ENCODE measurements at regions of chr3 and their contacts with region 1.

Region 1: DNA sequence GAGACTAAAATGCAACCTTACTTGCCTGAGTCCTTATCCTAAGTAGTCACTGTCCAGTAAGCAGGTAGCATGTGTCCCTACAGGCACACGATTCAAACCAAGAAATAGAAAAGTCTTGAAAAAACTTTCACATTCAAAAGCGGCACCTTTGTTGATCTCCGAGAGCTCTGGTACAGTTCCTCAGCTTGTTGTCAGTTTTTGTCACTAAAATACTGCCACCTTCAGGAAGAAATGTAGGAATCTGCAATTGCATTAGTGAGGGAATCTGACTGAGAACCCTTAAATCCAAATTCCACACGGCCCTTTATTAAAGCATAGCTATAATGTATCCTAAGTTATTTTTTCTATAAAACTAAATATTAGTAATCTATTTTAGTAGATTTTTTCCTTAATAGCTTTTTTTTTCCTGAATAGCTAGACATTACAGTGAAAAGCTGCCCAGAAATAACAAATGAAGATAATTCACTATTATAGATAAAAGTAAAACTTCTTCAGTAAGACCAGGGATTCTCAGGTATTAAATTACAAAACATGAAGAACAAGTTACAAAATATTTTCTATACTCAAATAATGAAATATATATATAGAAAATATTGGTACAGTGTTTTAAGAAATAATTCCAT is 44.0 kb downstream of the CCDC54 start:
- DNase-seq: peak in 6 of 35 experiments; percentile 3 to 67 (median 6)
- ATAC-seq: peak; percentile 45 to 81 (median 75)
- H3K4me3 ChIP-seq: no peak overlapping the region
- H3K4me3 Mint-ChIP-seq: no peak overlapping the region
- H3K27ac ChIP-seq: no peak overlapping the region
- H3K27ac Mint-ChIP-seq: no peak overlapping the region
- H3K4me1 ChIP-seq: no peaks in the 10 kb centered on the region
- H3K4me1 Mint-ChIP-seq: peaks cover 3 to 6% (median 3%) of the 10 kb centered on the region in 3 donors
- H3K27me3 ChIP-seq: no peaks in the 10 kb centered on the region
- H3K27me3 Mint-ChIP-seq: peaks cover 6 to 16% of the 10 kb centered on the region in 2 donors

Region 2: GRCh38 chr3:107235928-107236315 is 185.4 kb before region 1 on chr3:
- CTCF ChIA-PET with region 1: interaction called, 6 to 18 read pairs
- POLR2A ChIA-PET with region 1: no interaction called
- DNase-seq: peak in 31 of 35 experiments; percentile 2 to 82 (median 32)
- ATAC-seq: peak; percentile 61 to 72 (median 66)
- H3K4me3 ChIP-seq: peak overlapping the region in 1 of 2 donors; percentile 7
- H3K4me3 Mint-ChIP-seq: peak overlapping the region; percentile 52 to 67 (median 59)
- H3K27ac ChIP-seq: no peak overlapping the region
- H3K27ac Mint-ChIP-seq: peak overlapping the region in 1 of 2 donors; percentile 11
- H3K4me1 ChIP-seq: peaks cover 6 to 8% of the 10 kb centered on the region in 2 experiments
- H3K4me1 Mint-ChIP-seq: peaks cover 11 to 13% (median 13%) of the 10 kb centered on the region in 3 donors
- H3K27me3 ChIP-seq: peaks cover 0 to 4% of the 10 kb centered on the region in 2 experiments
- H3K27me3 Mint-ChIP-seq: peaks cover 4 to 8% of the 10 kb centered on the region in 2 donors

Region 3: GRCh38 chr3:107271787-107272387 is 149.4 kb before region 1 on chr3:
- CTCF ChIA-PET with region 1: interaction called, 10 to 25 read pairs
- POLR2A ChIA-PET with region 1: no interaction called
- DNase-seq: peak in 1 of 35 experiments; percentile 32
- ATAC-seq: peak in 2 of 4 experiments; percentile 36 to 51
- H3K4me3 ChIP-seq: no peak overlapping the region
- H3K4me3 Mint-ChIP-seq: no peak overlapping the region
- H3K27ac ChIP-seq: no peak overlapping the region
- H3K27ac Mint-ChIP-seq: no peak overlapping the region
- H3K4me1 ChIP-seq: no peaks in the 10 kb centered on the region
- H3K4me1 Mint-ChIP-seq: peaks cover 0 to 2% (median 0%) of the 10 kb centered on the region in 3 donors
- H3K27me3 ChIP-seq: no peaks in the 10 kb centered on the region
- H3K27me3 Mint-ChIP-seq: peaks cover 19 to 22% of the 10 kb centered on the region in 2 donors

Region 4: DNA sequence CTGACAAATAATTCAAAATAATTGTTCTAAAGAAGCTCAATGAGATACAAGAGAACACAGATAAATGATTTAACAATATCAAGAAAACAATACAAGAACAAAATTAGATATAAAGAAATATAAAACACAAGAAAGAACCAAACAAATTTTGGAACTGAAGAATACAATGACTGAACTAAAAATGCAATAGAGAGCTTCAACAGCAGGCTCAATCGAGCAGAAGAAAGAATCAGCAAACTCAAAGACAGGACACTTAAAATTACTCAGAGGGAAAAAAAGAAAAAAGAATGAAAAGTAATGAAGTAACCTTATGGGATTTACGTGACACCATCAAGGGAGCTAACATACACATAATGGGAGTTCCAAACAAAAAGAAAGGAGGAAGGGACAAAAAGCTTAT is 11.9 kb before region 1 on chr3:
- CTCF ChIA-PET with region 1: interaction called, 5 to 11 read pairs
- POLR2A ChIA-PET with region 1: interaction called in 1 of 2 experiments, 4 read pairs
- DNase-seq: no peak
- ATAC-seq: no peak
- H3K4me3 ChIP-seq: no peak overlapping the region
- H3K4me3 Mint-ChIP-seq: no peak overlapping the region
- H3K27ac ChIP-seq: no peak overlapping the region
- H3K27ac Mint-ChIP-seq: no peak overlapping the region
- H3K4me1 ChIP-seq: peaks cover 0 to 2% of the 10 kb centered on the region in 2 experiments
- H3K4me1 Mint-ChIP-seq: peaks cover 5 to 11% (median 5%) of the 10 kb centered on the region in 3 donors
- H3K27me3 ChIP-seq: peaks cover 0 to 8% of the 10 kb centered on the region in 2 experiments
- H3K27me3 Mint-ChIP-seq: peaks cover 0 to 3% of the 10 kb centered on the region in 2 donors

Measured in T-cell (primary cell).